BJ (cell line): ENCODE measurements at regions of chr11 and their contacts with region 1.

Region 1: GRCh38 chr11:64204464-64204989 is 2.0 kb upstream of the FERMT3 start:
- DNase-seq: peak; percentile 73
- H3K4me3 ChIP-seq: no peak overlapping the region
- H3K27me3 ChIP-seq: no peaks in the 10 kb centered on the region
- CTCF ChIP-seq: peak; percentile 82

Region 2: DNA sequence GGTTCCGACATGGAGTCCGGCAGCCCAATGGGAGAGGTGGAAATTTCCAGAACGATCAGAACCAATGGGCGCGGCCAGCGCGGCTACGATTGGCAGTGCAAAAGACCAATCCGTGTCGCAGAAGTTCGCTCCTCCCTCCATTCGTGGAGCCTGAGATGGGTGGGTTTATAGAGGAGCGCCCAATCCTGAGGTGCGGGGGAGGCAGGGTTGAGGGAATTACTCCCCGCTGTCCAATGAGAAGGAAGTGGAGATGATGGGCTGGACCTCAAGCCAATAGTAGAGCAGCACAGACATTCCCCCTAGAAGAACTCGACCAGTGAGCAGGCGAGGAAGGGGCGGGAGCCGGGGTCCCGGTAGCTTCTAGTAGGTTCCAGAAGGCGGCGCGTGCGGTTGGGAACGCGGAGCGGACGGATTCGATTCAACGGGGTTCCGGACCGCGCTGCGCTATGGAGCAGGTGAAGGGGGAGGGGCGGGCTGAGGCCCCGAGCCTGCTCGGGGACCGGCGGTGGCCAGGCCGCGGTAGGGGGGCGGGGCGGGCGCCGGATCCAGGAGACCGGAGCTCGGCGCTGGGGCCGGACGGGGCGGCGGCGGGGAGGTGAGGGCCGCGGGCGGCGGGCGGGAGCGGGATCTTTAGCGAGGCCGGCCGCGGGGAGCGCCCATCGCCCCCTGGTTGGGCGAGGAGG is 18.6 kb before region 1 on chr11 and contains the start of gene STIP1:
- CTCF ChIA-PET with region 1: interaction called, 11 read pairs
- POLR2A ChIA-PET with region 1: no interaction called
- DNase-seq: peak; percentile 100
- H3K4me3 ChIP-seq: peak within 1 kb of the TSS; percentile 60
- H3K27me3 ChIP-seq: no peaks in the 10 kb centered on the region
- CTCF ChIP-seq: peak; percentile 68
- polyA plus RNA-seq, gene STIP1: 139 and 150 TPM in 2 replicates

Region 3: DNA sequence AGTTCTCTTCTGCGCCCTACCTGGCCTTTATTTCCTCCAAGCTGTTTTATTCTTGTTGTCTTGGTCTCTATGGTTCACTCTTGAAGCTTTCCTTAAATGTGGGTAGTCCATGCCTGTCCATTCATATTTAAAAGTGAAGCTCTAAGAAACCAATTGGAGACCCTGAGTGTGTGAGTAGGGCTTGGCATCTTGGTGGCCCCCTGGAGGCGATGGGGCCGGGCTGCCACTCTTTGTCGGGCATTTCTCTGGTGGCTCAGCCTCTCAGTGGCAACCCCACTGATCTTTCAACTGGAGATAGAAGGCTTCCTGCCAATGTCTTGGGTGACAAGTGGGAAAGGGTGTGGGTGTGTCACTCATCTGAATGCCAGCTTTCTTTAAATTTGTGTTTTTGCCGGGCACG is 12.4 kb after region 1 on chr11:
- CTCF ChIA-PET with region 1: interaction called, 26 read pairs
- POLR2A ChIA-PET with region 1: interaction called, 3 read pairs
- DNase-seq: no peak
- H3K4me3 ChIP-seq: no peak overlapping the region
- H3K27me3 ChIP-seq: no peaks in the 10 kb centered on the region
- CTCF ChIP-seq: no peak

Region 4: GRCh38 chr11:64224896-64225611 is 20.5 kb after region 1 on chr11:
- CTCF ChIA-PET with region 1: interaction called, 26 read pairs
- POLR2A ChIA-PET with region 1: no interaction called
- DNase-seq: no peak
- H3K4me3 ChIP-seq: peak overlapping the region; percentile 69
- H3K27me3 ChIP-seq: no peaks in the 10 kb centered on the region
- CTCF ChIP-seq: no peak

Region 5: GRCh38 chr11:64358907-64359711 is 154.6 kb after region 1 on chr11 and contains the start of gene RPS6KA4:
- CTCF ChIA-PET with region 1: interaction called, 14 read pairs
- POLR2A ChIA-PET with region 1: no interaction called
- DNase-seq: no peak
- H3K4me3 ChIP-seq: peak within 1 kb of the TSS; percentile 89
- H3K27me3 ChIP-seq: no peaks in the 10 kb centered on the region
- CTCF ChIP-seq: no peak
- polyA plus RNA-seq, gene RPS6KA4: 22.9 and 33.8 TPM in 2 replicates

Region 6: DNA sequence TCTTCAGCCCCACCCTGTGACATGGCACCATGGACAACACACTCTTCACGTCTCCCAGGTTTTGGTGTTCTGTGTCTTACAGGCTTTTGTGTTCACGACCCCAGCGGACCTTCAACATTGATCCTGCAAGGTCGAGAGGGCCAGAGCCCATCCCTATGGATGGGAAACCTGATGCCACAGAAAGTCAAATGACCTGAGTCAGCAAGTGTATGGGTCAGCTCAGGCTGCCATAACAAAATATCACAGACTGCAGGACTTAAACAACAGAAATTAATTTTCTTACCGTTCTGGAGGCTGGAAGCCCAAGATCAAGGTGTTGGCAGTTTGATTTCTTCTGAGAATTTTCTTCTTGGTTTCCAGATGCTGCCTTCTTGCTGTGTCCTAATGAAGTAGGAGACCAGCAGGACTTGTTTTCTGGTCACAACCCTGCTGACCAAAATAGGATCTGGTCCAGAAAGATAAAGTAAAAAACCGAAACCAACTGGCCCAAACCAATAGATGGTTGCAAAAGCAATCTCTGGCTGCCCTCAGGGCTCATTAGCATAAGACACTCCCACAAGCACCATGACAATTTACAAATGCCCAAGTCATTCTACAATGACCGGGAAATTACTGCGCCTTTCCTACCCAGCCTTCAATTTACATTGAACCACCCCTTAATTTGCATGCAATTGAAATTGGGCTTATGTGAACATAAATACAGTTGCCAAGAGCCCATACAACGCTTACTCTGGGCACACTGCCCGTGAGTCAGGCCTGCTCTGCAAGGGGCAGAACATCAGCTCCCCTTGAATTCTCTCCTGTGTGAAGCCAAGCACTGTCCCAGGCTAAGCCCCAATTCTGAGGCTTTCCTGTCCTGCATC is 268.3 kb after region 1 on chr11:
- CTCF ChIA-PET with region 1: no interaction called
- POLR2A ChIA-PET with region 1: no interaction called
- DNase-seq: no peak
- H3K4me3 ChIP-seq: no peak overlapping the region
- H3K27me3 ChIP-seq: peaks cover 18% of the 10 kb centered on the region
- CTCF ChIP-seq: no peak